MCF 10A (cell line): ENCODE measurements at regions of chr17 and their contacts with region 1.

Region 1: DNA sequence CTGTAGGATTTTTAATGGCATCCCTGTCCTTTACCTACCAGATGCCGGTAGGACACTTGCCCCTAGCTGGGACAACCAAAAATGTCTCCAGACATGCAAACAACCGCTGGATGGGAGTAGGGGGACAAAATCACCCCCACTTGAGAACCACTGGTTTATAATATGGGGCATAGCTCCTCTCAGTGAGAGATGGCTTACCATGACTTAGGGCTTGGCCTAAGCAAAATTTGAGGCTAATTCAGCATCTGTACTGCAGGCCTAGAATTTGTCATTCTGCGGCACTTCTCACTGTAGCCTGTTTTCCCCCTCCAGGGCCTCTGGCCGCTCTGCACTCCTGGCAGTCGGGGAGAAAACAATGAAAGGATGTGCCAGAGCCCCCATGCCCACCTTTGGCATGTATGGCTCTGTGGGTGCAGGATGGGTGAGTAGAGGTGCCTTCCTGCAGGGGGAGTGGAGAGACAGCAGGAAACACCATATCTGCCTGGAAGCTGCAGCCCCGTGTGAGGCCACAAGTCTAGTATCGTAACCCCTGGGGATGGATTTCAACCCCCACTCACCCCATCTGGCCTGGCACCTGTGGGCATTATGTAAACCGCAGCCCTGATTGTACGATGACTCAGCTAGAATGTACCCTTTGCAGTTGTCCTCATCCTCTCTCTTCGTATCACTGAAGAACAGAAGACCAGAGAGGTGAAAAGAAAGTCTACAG is 268.1 kb downstream of the SOX9 start:
- DNase-seq: peak; percentile 95
- H3K4me3 Mint-ChIP-seq: peak overlapping the region; percentile 19
- H3K27ac Mint-ChIP-seq: peak overlapping the region; percentile 51
- H3K4me1 Mint-ChIP-seq: peaks cover 67% of the 10 kb centered on the region
- H3K27me3 Mint-ChIP-seq: no peaks in the 10 kb centered on the region
- CTCF ChIP-seq: peak; percentile 23

Region 2: GRCh38 chr17:72362376-72363088 is 26.4 kb before region 1 on chr17:
- CTCF ChIA-PET with region 1: interaction called, 3 read pairs
- POLR2A ChIA-PET with region 1: no interaction called
- intact Hi-C with region 1: loop called (anchors 2 kb)
- DNase-seq: peak; percentile 93
- H3K4me3 Mint-ChIP-seq: peak overlapping the region; percentile 45
- H3K27ac Mint-ChIP-seq: peak overlapping the region; percentile 83
- H3K4me1 Mint-ChIP-seq: peaks cover 33% of the 10 kb centered on the region
- H3K27me3 Mint-ChIP-seq: no peaks in the 10 kb centered on the region
- CTCF ChIP-seq: no peak

Region 3: GRCh38 chr17:72407336-72407909 is 18.5 kb after region 1 on chr17:
- CTCF ChIA-PET with region 1: no interaction called
- POLR2A ChIA-PET with region 1: interaction called, 5 read pairs
- intact Hi-C with region 1: loop called (anchors 2 kb)
- DNase-seq: peak; percentile 98
- H3K4me3 Mint-ChIP-seq: peak overlapping the region; percentile 28
- H3K27ac Mint-ChIP-seq: peak overlapping the region; percentile 93
- H3K4me1 Mint-ChIP-seq: peaks cover 40% of the 10 kb centered on the region
- H3K27me3 Mint-ChIP-seq: no peaks in the 10 kb centered on the region
- CTCF ChIP-seq: no peak

Region 4: GRCh38 chr17:72421128-72422092 is 32.5 kb after region 1 on chr17:
- CTCF ChIA-PET with region 1: interaction called, 3 read pairs
- POLR2A ChIA-PET with region 1: no interaction called
- intact Hi-C with region 1: loop called (anchors 2 kb)
- DNase-seq: peak; percentile 99
- H3K4me3 Mint-ChIP-seq: no peak overlapping the region
- H3K27ac Mint-ChIP-seq: peak overlapping the region; percentile 57
- H3K4me1 Mint-ChIP-seq: peaks cover 61% of the 10 kb centered on the region
- H3K27me3 Mint-ChIP-seq: no peaks in the 10 kb centered on the region
- CTCF ChIP-seq: no peak

Region 5: GRCh38 chr17:72465191-72466024 is 76.5 kb after region 1 on chr17:
- CTCF ChIA-PET with region 1: no interaction called
- POLR2A ChIA-PET with region 1: interaction called, 4 read pairs
- intact Hi-C with region 1: loop called (anchors 5 kb)
- DNase-seq: peak; percentile 97
- H3K4me3 Mint-ChIP-seq: peak overlapping the region; percentile 63
- H3K27ac Mint-ChIP-seq: no peak overlapping the region
- H3K4me1 Mint-ChIP-seq: peaks cover 50% of the 10 kb centered on the region
- H3K27me3 Mint-ChIP-seq: no peaks in the 10 kb centered on the region
- CTCF ChIP-seq: no peak